Upper lobe of right lung (tissue), 1 donor: ENCODE measurements at regions of chr19 and their contacts with region 1.

Region 1: DNA sequence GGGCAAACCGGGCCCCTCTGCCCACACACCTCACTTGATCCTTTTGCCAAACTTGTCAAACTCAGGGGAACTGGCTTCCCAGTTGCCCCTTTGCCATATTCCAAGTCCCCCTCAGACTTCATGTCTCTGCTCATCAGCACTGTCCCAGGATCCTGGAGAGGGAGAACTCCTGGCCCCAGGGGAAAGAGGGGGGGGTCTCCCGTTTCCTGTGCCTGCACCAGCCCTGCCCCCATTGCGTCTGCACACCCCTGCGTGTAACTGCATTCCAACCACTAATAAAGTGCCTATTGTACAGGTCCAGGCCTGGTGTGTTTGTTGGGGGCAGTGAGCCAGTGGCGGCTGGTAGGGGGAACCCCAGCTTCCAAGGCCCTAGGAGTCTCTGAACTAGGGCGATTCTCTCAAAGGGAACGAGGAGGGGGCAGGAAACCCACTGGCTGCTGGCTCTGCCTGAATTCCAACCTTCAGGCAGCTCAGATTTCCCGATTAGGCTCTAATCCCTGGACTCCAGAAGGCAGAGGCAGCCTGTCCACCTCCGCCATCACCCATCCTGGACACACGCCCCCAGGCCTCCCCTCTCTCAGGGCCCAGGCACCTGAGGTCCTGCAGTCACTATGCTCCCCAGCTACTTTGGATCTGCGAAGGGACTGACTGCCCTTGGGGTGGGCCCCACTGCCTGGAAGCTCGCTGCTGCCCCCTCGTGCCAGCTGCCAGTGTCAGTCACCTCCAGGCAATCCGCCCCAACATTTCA is 9.7 kb upstream of the ILF3 start:
- DNase-seq: peak; percentile 93
- ATAC-seq: peak; percentile 91
- H3K4me3 ChIP-seq: no peak overlapping the region
- H3K27ac ChIP-seq: peak overlapping the region; percentile 47
- H3K4me1 ChIP-seq: peaks cover 21% of the 10 kb centered on the region
- H3K27me3 ChIP-seq: no peaks in the 10 kb centered on the region
- CTCF ChIP-seq: peak; percentile 84

Region 2: GRCh38 chr19:10583036-10583776 is 61.2 kb before region 1 on chr19:
- intact Hi-C with region 1: loop called (anchors 2 kb)
- DNase-seq: no peak
- ATAC-seq: peak; percentile 3
- H3K4me3 ChIP-seq: no peak overlapping the region
- H3K27ac ChIP-seq: no peak overlapping the region
- H3K4me1 ChIP-seq: peaks cover 3% of the 10 kb centered on the region
- H3K27me3 ChIP-seq: peaks cover 6% of the 10 kb centered on the region
- CTCF ChIP-seq: no peak

Region 3: GRCh38 chr19:10760273-10760944 is 116.0 kb after region 1 on chr19:
- intact Hi-C with region 1: no loop called
- DNase-seq: no peak
- ATAC-seq: no peak
- H3K4me3 ChIP-seq: no peak overlapping the region
- H3K27ac ChIP-seq: peak overlapping the region; percentile 61
- H3K4me1 ChIP-seq: peaks cover 46% of the 10 kb centered on the region
- H3K27me3 ChIP-seq: no peaks in the 10 kb centered on the region
- CTCF ChIP-seq: no peak